ENCODE measurements at regions of chr14 and their contacts with region 1.

Region 1: GRCh38 chr14:98138666-98139065 is 1133.3 kb downstream of the BCL11B start:
- DNase-seq: peak; percentile 69
- H3K4me3 Mint-ChIP-seq: peak overlapping the region; percentile 64
- H3K27ac Mint-ChIP-seq: peak overlapping the region; percentile 87
- H3K4me1 Mint-ChIP-seq: peaks cover 87% of the 10 kb centered on the region
- H3K27me3 Mint-ChIP-seq: no peaks in the 10 kb centered on the region

Region 2: DNA sequence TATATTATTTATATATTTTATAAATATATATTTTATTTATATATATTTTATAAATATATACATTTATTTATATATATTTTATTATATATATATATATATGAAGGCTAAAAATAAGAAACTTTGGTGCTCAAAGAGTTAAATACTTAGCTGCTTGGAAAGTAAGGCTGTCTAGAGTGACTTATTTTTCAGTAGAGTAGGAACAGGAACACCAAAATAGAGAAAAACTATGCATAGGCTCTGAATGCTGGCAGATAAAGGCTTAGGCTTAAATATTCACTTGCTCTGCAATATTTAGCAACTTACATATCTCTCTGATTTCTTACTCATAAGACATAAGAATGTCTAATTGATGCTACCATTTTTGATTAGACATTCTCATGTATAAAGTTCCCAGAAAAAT is 350.3 kb before region 1 on chr14:
- intact Hi-C with region 1: loop called (anchors 10 kb)
- DNase-seq: no peak
- H3K4me3 Mint-ChIP-seq: no peak overlapping the region
- H3K27ac Mint-ChIP-seq: no peak overlapping the region
- H3K4me1 Mint-ChIP-seq: peaks cover 25% of the 10 kb centered on the region
- H3K27me3 Mint-ChIP-seq: no peaks in the 10 kb centered on the region

Region 3: DNA sequence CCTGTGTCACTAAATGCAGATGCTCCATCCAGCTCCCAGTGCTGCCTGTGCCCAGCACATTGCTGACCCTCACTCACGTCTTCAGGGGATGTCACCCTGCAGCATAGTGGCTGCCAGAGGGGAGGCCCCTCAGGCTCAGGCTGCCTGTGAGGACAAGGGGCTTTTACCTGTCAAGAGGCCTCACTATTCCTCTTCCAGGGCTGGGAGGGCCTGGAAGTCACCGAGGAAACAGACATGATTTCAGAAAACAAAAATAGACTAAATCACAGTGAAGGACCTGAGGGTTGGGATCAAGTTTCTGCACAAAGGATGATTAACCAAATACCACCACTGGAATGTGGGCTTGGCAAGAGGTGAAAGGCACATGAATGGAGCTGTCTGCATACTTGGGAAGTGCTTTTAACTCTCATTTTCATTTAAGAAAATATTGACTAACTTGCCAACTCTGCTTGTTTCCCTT is 68.9 kb before region 1 on chr14:
- intact Hi-C with region 1: no loop called
- DNase-seq: no peak
- H3K4me3 Mint-ChIP-seq: no peak overlapping the region
- H3K27ac Mint-ChIP-seq: no peak overlapping the region
- H3K4me1 Mint-ChIP-seq: no peaks in the 10 kb centered on the region
- H3K27me3 Mint-ChIP-seq: peaks cover 5% of the 10 kb centered on the region

Region 4: DNA sequence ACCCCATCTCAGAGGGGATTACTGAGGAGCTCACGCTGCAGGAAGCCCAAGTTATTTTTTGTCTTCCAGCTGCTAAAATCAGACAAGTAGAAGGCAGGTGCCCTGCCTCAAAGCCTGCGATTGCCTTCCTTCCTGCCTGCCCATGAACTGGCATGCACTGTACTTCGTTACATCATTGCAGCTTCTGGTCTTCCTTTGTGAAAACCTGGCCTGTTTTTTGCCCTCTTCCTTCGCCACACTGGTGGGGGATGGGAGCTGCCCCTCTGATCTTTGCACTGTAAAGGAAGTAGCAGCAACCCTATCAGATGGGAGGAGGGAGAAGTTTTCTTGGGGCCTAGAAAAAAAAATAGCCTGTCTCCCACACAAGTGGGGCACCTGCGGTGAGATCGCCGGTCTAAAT is 34.6 kb after region 1 on chr14:
- intact Hi-C with region 1: loop called (anchors 1 kb)
- DNase-seq: peak; percentile 45
- H3K4me3 Mint-ChIP-seq: peak overlapping the region; percentile 73
- H3K27ac Mint-ChIP-seq: peak overlapping the region; percentile 90
- H3K4me1 Mint-ChIP-seq: peaks cover 97% of the 10 kb centered on the region
- H3K27me3 Mint-ChIP-seq: no peaks in the 10 kb centered on the region

Region 5: GRCh38 chr14:98312006-98312405 is 173.3 kb after region 1 on chr14:
- intact Hi-C with region 1: loop called (anchors 5 kb)
- DNase-seq: no peak
- H3K4me3 Mint-ChIP-seq: no peak overlapping the region
- H3K27ac Mint-ChIP-seq: no peak overlapping the region
- H3K4me1 Mint-ChIP-seq: no peaks in the 10 kb centered on the region
- H3K27me3 Mint-ChIP-seq: no peaks in the 10 kb centered on the region

Region 6: DNA sequence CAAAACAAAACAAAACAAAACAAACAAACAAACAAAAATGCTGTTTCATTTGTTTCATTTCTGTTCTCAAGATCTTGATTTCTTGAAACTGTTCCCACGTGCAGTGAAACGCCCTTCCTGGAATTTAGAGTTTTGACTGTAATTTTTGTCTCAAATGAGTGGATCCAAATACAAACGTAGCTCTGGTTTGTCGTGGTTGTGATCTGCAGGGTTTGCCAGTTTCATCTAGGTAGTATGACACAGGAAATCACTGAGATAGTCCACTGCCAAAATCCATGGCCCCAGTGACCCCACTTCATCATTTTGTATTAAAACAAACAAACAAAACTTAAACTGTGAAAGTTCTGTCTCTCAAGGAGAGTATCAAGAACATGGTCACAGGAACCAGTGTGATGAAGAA is 294.8 kb after region 1 on chr14:
- intact Hi-C with region 1: loop called (anchors 2 kb)
- DNase-seq: no peak
- H3K4me3 Mint-ChIP-seq: no peak overlapping the region
- H3K27ac Mint-ChIP-seq: peak overlapping the region; percentile 19
- H3K4me1 Mint-ChIP-seq: peaks cover 30% of the 10 kb centered on the region
- H3K27me3 Mint-ChIP-seq: no peaks in the 10 kb centered on the region

Region 7: GRCh38 chr14:98512501-98513251 is 374.0 kb after region 1 on chr14:
- intact Hi-C with region 1: loop called (anchors 2 kb)
- DNase-seq: no peak
- H3K4me3 Mint-ChIP-seq: no peak overlapping the region
- H3K27ac Mint-ChIP-seq: peak overlapping the region; percentile 12
- H3K4me1 Mint-ChIP-seq: peaks cover 36% of the 10 kb centered on the region
- H3K27me3 Mint-ChIP-seq: no peaks in the 10 kb centered on the region

Region 8: GRCh38 chr14:99192028-99192621 is 1053.5 kb after region 1 on chr14:
- intact Hi-C with region 1: loop called (anchors 2 kb)
- DNase-seq: no peak
- H3K4me3 Mint-ChIP-seq: peak overlapping the region; percentile 90
- H3K27ac Mint-ChIP-seq: peak overlapping the region; percentile 99
- H3K4me1 Mint-ChIP-seq: peaks cover 93% of the 10 kb centered on the region
- H3K27me3 Mint-ChIP-seq: no peaks in the 10 kb centered on the region

Measured in activated T-helper 1 cell treated with anti-CD3 and anti-CD28 coated beads, Interleukin-12 subunit alpha, Interleukin-12 subunit beta, Interleukin-2, Interleukin-4 antibody, amounts not matched to agents 30 ng/mL and 10 ng/mL and 1 ng/mL, durations not matched to agents 14 hours and 24 hours and 36 hours (primary cell).